IMR-90 (cell line): ENCODE measurements at regions of chr22 and their contacts with region 1.

Region 1: GRCh38 chr22:30079952-30080533 is at the start of gene HORMAD2:
- DNase-seq: no peak
- ATAC-seq: no peak
- H3K4me3 ChIP-seq: no peak within 1 kb of the TSS
- H3K27ac ChIP-seq: no peak within 1 kb of the TSS
- H3K4me1 ChIP-seq: no peaks in the 10 kb centered on the region
- H3K27me3 ChIP-seq: peaks cover 21% of the 10 kb centered on the region
- CTCF ChIP-seq: no peak
- POLR2A ChIP-seq: no peak
- RAD21 ChIP-seq: no peak
- total RNA-seq, gene HORMAD2: not detected in 2 replicates

Region 2: GRCh38 chr22:29635734-29636357 is 444.2 kb before region 1 on chr22:
- CTCF ChIA-PET with region 1: no interaction called
- POLR2A ChIA-PET with region 1: no interaction called
- dilution Hi-C with region 1: no loop called
- in situ Hi-C with region 1: loop called (anchors 10 kb)
- intact Hi-C with region 1: no loop called
- DNase-seq: peak; percentile 73
- ATAC-seq: peak; percentile 88
- H3K4me3 ChIP-seq: no peak overlapping the region
- H3K27ac ChIP-seq: no peak overlapping the region
- H3K4me1 ChIP-seq: peaks cover 8% of the 10 kb centered on the region
- H3K27me3 ChIP-seq: no peaks in the 10 kb centered on the region
- CTCF ChIP-seq: peak; percentile 72
- POLR2A ChIP-seq: no peak
- RAD21 ChIP-seq: peak; percentile 73

Region 3: GRCh38 chr22:30054588-30055033 is 25.4 kb before region 1 on chr22:
- CTCF ChIA-PET with region 1: interaction called, 10 read pairs
- POLR2A ChIA-PET with region 1: no interaction called
- dilution Hi-C with region 1: no loop called
- in situ Hi-C with region 1: no loop called
- intact Hi-C with region 1: no loop called
- DNase-seq: no peak
- ATAC-seq: no peak
- H3K4me3 ChIP-seq: no peak overlapping the region
- H3K27ac ChIP-seq: no peak overlapping the region
- H3K4me1 ChIP-seq: no peaks in the 10 kb centered on the region
- H3K27me3 ChIP-seq: no peaks in the 10 kb centered on the region
- CTCF ChIP-seq: no peak
- POLR2A ChIP-seq: no peak
- RAD21 ChIP-seq: no peak